ENCODE measurements at regions of chr9 and their contacts with region 1.

Region 1: GRCh38 chr9:118711843-118712242 is 657.4 kb downstream of the BRINP1 start:
- DNase-seq: no peak
- ATAC-seq: no peak
- H3K4me3 ChIP-seq: no peak overlapping the region
- H3K27ac ChIP-seq: no peak overlapping the region
- H3K4me1 ChIP-seq: no peaks in the 10 kb centered on the region
- H3K27me3 ChIP-seq: no peaks in the 10 kb centered on the region
- CTCF ChIP-seq: no peak

Region 2: GRCh38 chr9:118670011-118670953 is 41.6 kb before region 1 on chr9:
- intact Hi-C with region 1: no loop called
- DNase-seq: no peak
- ATAC-seq: no peak
- H3K4me3 ChIP-seq: no peak overlapping the region
- H3K27ac ChIP-seq: no peak overlapping the region
- H3K4me1 ChIP-seq: no peaks in the 10 kb centered on the region
- H3K27me3 ChIP-seq: no peaks in the 10 kb centered on the region
- CTCF ChIP-seq: no peak

Region 3: GRCh38 chr9:118767571-118767970 is 55.7 kb after region 1 on chr9:
- intact Hi-C with region 1: loop called in 1 of 10 experiments (anchors 5 kb)
- DNase-seq: no peak
- ATAC-seq: no peak
- H3K4me3 ChIP-seq: no peak overlapping the region
- H3K27ac ChIP-seq: no peak overlapping the region
- H3K4me1 ChIP-seq: no peaks in the 10 kb centered on the region
- H3K27me3 ChIP-seq: no peaks in the 10 kb centered on the region
- CTCF ChIP-seq: no peak

Measured in heart right ventricle (tissue), 16 donors.